Common myeloid progenitor, CD34-positive (primary cell): ENCODE measurements at regions of chr22 and their contacts with region 1.

Region 1: DNA sequence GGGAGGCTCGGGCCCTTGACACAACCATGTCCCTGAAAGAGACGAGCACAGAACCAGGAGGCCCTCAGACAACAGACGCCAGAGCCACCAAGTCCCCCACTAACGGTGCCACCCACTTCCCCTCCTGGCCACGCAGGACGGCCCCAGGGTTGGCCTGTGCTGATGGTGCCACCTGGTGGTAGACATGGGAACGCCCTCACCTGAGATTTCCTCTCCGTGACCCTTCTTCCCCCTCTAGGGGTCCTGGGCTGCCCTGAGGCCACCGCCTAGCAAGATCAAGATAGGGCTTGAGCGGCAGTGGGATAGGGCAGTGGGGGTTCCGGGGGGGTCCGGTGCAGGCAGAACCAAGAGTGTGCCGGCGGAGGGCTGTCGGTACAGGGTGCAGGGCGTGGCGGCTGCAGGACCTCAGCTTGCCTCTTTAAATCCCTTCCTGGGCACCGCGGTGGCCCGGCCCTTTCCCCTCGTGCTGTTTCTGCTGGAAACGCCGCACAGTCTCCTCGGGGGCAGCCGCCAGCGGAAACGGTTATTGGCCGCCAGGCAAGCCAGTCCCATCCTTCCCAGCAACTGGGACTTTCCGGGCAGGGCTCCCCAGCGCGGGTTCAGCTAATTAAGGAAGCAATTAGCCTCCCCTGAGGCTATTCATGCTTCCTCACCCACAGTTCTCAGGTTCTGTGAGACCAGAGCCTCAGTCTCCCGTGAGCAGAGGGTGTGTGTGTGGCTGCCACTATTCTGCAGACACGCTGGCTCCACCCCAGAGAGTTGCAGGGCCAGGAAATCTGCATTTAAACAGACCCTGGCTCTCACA is 5.5 kb upstream of the NFAM1 start:
- DNase-seq: peak; percentile 80 to 85 (median 84)
- H3K4me3 ChIP-seq: peak overlapping the region in 6 of 7 experiments; percentile 46 to 79 (median 64)
- H3K27ac ChIP-seq: no peak overlapping the region
- H3K4me1 ChIP-seq: peaks cover 6 to 61% (median 53%) of the 10 kb centered on the region in 4 experiments
- H3K27me3 ChIP-seq: no peaks in the 10 kb centered on the region

Region 2: DNA sequence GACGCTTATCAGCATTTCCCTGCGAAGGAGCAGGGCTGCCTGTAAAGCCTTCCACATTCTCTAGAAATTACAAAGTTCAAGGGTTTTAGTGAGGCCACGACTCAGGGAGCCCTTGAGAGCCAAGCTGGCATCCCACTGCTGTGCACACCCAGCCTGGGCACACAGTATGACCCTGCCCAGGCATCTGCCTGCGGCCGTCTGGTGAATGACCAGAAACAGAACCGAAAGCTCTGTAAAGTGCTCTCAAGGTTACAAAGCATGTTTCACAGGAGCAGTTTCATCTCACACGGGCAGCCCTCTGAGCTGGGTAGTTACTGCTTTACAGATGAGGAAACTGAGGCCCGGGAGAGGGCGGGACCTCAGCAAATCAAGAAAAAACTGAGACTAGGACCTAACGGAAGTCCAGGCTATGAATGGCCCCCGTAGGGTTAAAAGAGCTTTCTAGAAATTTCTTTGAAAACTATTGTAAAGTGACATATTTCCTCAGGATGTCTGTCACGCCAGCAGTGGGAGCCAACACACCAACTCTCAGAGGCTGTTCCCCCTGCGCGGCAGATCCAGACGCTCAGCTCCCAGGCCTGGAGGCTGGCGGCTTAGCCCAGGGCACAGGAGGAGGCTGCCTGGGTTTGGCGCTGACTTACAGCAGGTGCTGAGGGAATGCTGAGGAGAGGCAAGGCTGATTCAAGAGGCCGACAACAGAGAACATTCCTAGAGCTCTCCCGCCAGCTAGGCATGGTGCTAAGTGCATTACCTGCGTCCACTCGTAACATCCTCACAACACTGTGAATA is 159.5 kb before region 1 on chr22:
- CTCF ChIA-PET with region 1: interaction called, 25 read pairs
- POLR2A ChIA-PET with region 1: no interaction called
- DNase-seq: peak in 2 of 3 donors; percentile 56 to 59
- H3K4me3 ChIP-seq: no peak overlapping the region
- H3K27ac ChIP-seq: no peak overlapping the region
- H3K4me1 ChIP-seq: peaks cover 0 to 2% (median 0%) of the 10 kb centered on the region in 4 experiments
- H3K27me3 ChIP-seq: peaks cover 0 to 21% (median 11%) of the 10 kb centered on the region in 5 experiments

Region 3: DNA sequence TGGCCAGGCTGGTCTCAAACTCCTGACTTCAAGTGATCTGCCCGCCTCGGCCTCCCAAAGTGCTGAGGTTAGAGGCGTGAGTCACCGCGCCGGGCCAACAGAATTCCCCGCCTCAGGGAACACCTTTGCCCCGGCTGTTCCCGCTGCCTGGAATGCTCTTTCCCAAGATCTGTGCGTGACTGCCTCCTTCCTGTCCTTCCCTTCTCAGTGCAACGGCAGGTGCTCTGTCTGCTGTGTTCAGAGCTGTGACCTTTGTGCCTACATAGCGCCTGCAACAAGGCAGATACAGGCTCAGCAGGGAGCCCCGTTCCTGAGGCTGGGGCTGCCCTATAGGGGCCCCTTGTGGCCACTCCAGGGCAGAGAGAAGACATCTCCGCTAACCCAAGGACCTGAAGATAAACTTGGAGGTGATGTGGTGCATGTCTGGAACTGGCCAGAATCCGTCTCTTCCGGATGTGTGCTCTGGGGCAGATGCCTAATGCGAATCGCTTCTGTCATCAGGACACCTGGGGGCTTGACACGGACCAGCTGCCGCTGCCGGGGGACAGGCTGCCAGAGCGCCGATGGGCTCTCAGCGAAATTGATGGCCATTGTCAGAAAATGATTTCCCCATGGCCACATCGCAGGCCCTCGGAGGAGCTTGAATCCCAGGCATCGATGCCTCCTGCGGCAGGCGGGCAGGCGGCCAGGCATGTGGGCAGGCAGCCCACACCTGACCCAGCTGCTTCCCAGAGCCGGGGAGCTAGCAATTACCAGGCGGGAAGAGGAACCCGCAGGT is 123.7 kb before region 1 on chr22:
- CTCF ChIA-PET with region 1: interaction called, 13 read pairs
- POLR2A ChIA-PET with region 1: interaction called, 4 read pairs
- DNase-seq: peak; percentile 50 to 77 (median 73)
- H3K4me3 ChIP-seq: no peak overlapping the region
- H3K27ac ChIP-seq: no peak overlapping the region
- H3K4me1 ChIP-seq: peaks cover 0 to 31% (median 8%) of the 10 kb centered on the region in 4 experiments
- H3K27me3 ChIP-seq: no peaks in the 10 kb centered on the region

Region 4: DNA sequence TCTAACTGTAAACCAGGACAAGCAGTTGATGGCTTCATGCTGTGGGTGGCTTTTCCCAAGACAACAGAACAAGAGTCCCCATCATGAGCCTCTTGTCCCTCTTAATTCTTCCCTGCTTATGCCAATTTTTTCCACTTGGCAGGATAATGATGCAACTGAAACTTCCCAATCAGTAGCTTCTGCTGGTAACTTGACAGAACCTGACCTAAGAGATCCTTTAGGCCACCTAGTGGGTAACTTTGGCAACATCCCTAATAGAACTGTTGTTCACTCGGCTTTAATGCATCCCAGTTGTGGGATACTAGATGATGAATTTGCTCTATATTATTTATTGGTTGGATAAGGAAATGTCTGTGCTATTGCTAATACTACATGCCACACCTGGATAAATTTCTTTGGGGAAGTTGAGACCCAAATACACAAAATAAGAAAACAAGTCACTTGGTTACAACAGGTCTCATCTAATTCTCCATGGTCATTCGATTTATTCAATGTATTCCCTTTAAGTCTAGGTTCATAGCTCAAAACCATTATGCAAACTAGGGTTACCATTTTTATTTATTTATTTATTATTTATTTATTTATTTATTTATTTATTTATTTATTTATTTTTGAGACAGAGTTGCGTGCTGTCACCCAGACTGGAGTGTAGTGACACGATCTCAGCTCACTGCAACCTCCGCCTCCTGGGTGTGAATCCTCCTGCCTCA is 35.9 kb after region 1 on chr22:
- CTCF ChIA-PET with region 1: interaction called, 12 read pairs
- POLR2A ChIA-PET with region 1: no interaction called
- DNase-seq: peak; percentile 42 to 70 (median 57)
- H3K4me3 ChIP-seq: no peak overlapping the region
- H3K27ac ChIP-seq: no peak overlapping the region
- H3K4me1 ChIP-seq: no peaks in the 10 kb centered on the region
- H3K27me3 ChIP-seq: peaks cover 0 to 3% (median 0%) of the 10 kb centered on the region in 5 experiments